Naive thymus-derived CD8-positive, alpha-beta T cell (primary cell): ENCODE measurements at regions of chr19 and their contacts with region 1.

Region 1: DNA sequence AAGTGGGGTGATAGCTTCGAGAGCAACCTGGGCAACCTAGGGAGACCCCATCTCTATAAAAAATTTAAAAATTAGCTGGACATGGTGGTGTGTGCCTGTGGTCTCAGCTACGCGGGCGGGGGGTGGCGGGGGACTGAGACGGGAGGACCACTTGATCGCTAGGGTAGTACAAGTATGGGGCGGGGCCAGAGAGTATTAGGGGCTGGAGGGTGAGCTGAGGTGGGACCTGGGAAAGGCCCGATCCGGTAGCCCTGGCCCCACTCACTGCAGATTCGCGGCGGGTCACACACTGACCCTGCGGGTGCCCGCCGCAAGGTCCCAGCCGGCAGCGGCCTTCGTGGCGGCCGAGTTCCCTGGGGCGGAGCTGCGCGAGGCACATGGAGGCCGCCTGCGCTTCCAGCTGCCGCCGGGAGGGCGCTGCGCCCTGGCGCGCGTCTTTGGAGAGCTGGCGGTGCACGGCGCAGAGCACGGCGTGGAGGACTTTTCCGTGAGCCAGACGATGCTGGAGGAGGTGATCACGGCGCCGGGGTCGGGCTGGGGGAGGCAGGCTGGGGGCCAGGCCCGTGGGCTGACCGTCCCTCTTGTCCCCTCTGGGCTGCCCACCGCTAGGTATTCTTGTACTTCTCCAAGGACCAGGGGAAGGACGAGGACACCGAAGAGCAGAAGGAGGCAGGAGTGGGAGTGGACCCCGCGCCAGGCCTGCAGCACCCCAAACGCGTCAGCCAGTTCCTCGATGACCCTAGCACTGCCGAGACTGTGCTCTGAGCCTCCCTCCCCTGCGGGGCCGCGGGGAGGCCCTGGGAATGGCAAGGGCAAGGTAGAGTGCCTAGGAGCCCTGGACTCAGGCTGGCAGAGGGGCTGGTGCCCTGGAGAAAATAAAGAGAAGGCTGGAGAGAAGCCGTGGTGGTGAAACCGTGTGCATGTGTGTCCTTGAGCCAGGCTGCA is 2.0 kb upstream of the ARHGAP45 start:
- DNase-seq: peak in 9 of 10 donors; percentile 59 to 78 (median 68)
- ATAC-seq: peak; percentile 21 to 30
- H3K4me3 Mint-ChIP-seq: peak overlapping the region; percentile 40 to 92 (median 74)
- H3K27ac Mint-ChIP-seq: peak overlapping the region in 9 of 10 donors; percentile 76 to 94 (median 91)
- H3K4me1 Mint-ChIP-seq: peaks cover 16 to 46% (median 34%) of the 10 kb centered on the region in 4 donors
- H3K27me3 Mint-ChIP-seq: no peaks in the 10 kb centered on the region

Region 2: GRCh38 chr19:996051-996838 is 68.7 kb before region 1 on chr19:
- POLR2A ChIA-PET with region 1: interaction called, 27 read pairs
- DNase-seq: peak; percentile 55 to 94 (median 86)
- ATAC-seq: peak; percentile 84 to 87
- H3K4me3 Mint-ChIP-seq: peak overlapping the region; percentile 61 to 87 (median 80)
- H3K27ac Mint-ChIP-seq: peak overlapping the region; percentile 51 to 96 (median 94)
- H3K4me1 Mint-ChIP-seq: peaks cover 6 to 20% (median 19%) of the 10 kb centered on the region in 4 donors
- H3K27me3 Mint-ChIP-seq: peaks cover 5 to 30% (median 11%) of the 10 kb centered on the region in 5 donors

Region 3: GRCh38 chr19:1039646-1040475 is 25.1 kb before region 1 on chr19 and contains the start of gene ABCA7:
- POLR2A ChIA-PET with region 1: interaction called, 768 read pairs
- DNase-seq: peak; percentile 98 to 100 (median 99)
- ATAC-seq: peak; percentile 86 to 93
- H3K4me3 Mint-ChIP-seq: peak within 1 kb of the TSS; percentile 93 to 100 (median 99)
- H3K27ac Mint-ChIP-seq: peak within 1 kb of the TSS; percentile 92 to 98 (median 94)
- H3K4me1 Mint-ChIP-seq: peaks cover 28 to 63% (median 55%) of the 10 kb centered on the region in 4 donors
- H3K27me3 Mint-ChIP-seq: no peaks in the 10 kb centered on the region
- polyA plus RNA-seq, gene ABCA7: 4.2 to 14.4 (median 8.7) TPM

Region 4: GRCh38 chr19:1103708-1104310 is 38.9 kb after region 1 on chr19 and contains the start of gene GPX4:
- POLR2A ChIA-PET with region 1: interaction called, 621 read pairs
- DNase-seq: peak; percentile 90 to 99 (median 98)
- ATAC-seq: peak; percentile 85 to 89
- H3K4me3 Mint-ChIP-seq: peak within 1 kb of the TSS; percentile 66 to 87 (median 76)
- H3K27ac Mint-ChIP-seq: peak within 1 kb of the TSS; percentile 37 to 97 (median 94)
- H3K4me1 Mint-ChIP-seq: peaks cover 12 to 47% (median 32%) of the 10 kb centered on the region in 4 donors
- H3K27me3 Mint-ChIP-seq: no peaks in the 10 kb centered on the region
- polyA plus RNA-seq, gene GPX4: 370 to 465 (median 405) TPM

Region 5: GRCh38 chr19:1241417-1242095 is 176.6 kb after region 1 on chr19 and contains the start of gene ATP5F1D:
- POLR2A ChIA-PET with region 1: interaction called, 10 read pairs
- DNase-seq: peak; percentile 79 to 93 (median 86)
- ATAC-seq: peak; percentile 64 to 66
- H3K4me3 Mint-ChIP-seq: peak within 1 kb of the TSS; percentile 79 to 96 (median 88)
- H3K27ac Mint-ChIP-seq: peak within 1 kb of the TSS; percentile 86 to 98 (median 94)
- H3K4me1 Mint-ChIP-seq: peaks cover 13 to 48% (median 44%) of the 10 kb centered on the region in 4 donors
- H3K27me3 Mint-ChIP-seq: peaks cover 2 to 9% (median 7%) of the 10 kb centered on the region in 5 donors
- polyA plus RNA-seq, gene ATP5F1D: 214 to 264 (median 262) TPM